A673 (cell line): ENCODE measurements at regions of chr10 and their contacts with region 1.

Region 1: DNA sequence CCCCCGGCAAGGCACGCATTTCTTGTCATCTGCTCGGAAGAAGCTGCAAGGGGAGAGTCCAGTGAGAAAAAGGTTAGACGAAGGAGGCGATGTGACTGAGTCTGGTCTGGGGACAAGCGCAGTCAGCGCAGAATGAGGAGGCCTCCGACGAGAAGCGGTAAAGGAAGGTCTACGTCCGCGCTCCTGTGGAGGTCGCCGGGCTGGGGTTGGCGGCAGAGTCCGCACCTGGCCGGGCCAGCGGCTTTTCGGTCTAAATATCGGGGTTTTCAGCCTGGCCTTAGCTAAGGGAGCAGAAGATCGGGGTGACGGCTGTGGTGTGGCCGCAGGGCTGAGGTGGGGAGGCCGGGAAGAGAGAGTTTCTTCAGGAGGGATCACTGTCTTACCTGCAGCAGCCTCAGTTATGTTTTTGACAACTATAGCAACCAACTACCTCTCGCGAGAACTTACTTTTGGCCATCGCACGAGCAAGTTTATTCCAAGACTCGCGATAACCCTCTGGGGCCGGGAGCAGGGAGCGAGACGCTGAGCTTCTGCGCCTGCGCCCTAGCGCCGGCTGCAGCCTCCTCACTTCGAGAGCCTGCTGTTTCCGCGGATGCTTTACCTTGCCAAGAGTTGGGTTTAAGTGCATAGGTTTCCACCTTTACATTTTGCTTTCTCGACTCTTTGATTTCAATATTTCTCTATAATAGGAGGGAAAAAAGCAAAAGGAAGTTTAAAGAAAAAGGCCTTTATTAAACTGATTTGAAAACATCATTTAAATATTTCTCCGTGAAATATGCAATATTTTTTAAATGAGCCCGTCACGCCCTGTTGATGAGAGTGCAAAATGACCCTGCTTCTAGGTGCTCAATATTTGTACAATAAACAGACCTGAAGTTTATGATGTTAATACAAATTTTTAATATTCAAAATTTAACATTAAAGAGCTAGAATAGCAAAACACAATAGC is at the start of gene CFAP70:
- DNase-seq: peak; percentile 98
- H3K4me3 ChIP-seq: peak within 1 kb of the TSS; percentile 58
- H3K27ac ChIP-seq: peak within 1 kb of the TSS; percentile 43
- H3K4me1 ChIP-seq: no peaks in the 10 kb centered on the region
- H3K27me3 ChIP-seq: peaks cover 17% of the 10 kb centered on the region
- CTCF ChIP-seq: no peak
- total RNA-seq, gene CFAP70: 0.06 and 0.13 TPM in 2 replicates

Region 2: GRCh38 chr10:72841487-72841886 is 517.1 kb before region 1 on chr10:
- CTCF ChIA-PET with region 1: no interaction called
- POLR2A ChIA-PET with region 1: no interaction called
- intact Hi-C with region 1: no loop called
- DNase-seq: no peak
- H3K4me3 ChIP-seq: no peak overlapping the region
- H3K27ac ChIP-seq: no peak overlapping the region
- H3K4me1 ChIP-seq: no peaks in the 10 kb centered on the region
- H3K27me3 ChIP-seq: no peaks in the 10 kb centered on the region
- CTCF ChIP-seq: no peak

Region 3: GRCh38 chr10:73339436-73339835 is 19.2 kb before region 1 on chr10:
- CTCF ChIA-PET with region 1: no interaction called
- POLR2A ChIA-PET with region 1: interaction called, 13 read pairs
- intact Hi-C with region 1: no loop called
- DNase-seq: no peak
- H3K4me3 ChIP-seq: no peak overlapping the region
- H3K27ac ChIP-seq: no peak overlapping the region
- H3K4me1 ChIP-seq: no peaks in the 10 kb centered on the region
- H3K27me3 ChIP-seq: no peaks in the 10 kb centered on the region
- CTCF ChIP-seq: no peak

Region 4: GRCh38 chr10:73413528-73414229 is 55.1 kb after region 1 on chr10 and contains the start of gene ANXA7:
- CTCF ChIA-PET with region 1: no interaction called
- POLR2A ChIA-PET with region 1: no interaction called
- intact Hi-C with region 1: no loop called
- DNase-seq: peak; percentile 95
- H3K4me3 ChIP-seq: peak within 1 kb of the TSS; percentile 97
- H3K27ac ChIP-seq: peak within 1 kb of the TSS; percentile 96
- H3K4me1 ChIP-seq: peaks cover 7% of the 10 kb centered on the region
- H3K27me3 ChIP-seq: no peaks in the 10 kb centered on the region
- CTCF ChIP-seq: peak; percentile 29; the same call in 1 of the 2 replicates
- total RNA-seq, gene ANXA7: 151 and 156 TPM in 2 replicates